WTC11 (cell line): ENCODE measurements at regions of chr10 and their contacts with region 1.

Region 1: DNA sequence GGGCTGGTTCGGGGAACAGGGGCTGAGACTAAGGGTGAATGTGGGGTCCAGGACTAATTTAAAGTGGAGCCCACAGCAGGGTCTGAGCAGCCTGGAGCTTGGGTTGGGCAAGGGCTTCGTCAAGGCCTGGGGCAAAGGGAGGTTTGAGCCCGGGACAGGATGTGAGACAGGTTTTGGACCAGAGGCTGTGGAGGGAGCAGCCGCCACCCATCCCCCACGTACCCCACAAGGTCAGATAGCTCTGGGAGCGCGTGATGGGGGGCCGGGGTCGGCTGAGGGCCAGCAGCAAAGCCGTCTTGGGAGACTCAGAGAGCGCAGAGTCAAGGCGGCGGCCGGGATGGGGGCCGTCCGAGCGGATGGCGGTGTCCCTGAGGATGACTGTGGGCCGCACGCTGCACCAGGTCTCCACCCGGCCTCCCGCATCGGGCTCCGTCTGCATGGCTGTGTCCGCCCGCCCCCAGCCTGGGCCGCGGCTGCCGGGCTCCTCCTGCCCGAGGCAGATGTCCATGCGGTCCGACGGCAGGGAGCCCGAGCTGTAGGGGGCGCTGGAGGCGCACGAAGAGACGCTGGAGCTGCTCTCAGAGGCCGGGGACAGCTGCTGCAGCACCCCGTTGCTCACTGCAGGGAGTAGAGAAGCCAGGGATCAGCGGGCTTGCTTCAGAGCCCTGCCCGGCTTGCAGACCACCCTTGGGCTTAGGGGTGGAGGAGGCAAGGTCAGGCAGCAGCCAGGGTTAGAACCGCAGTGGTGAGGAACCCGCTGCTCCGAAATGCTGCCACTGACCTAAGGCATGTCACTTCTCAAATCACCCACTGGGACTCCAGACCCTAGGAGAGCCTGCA is 12.1 kb downstream of the PDZD7 start:
- DNase-seq: peak; percentile 95
- ATAC-seq: peak; percentile 77
- H3K4me3 Mint-ChIP-seq: peak overlapping the region; percentile 73
- H3K27ac Mint-ChIP-seq: no peak overlapping the region
- H3K4me1 Mint-ChIP-seq: peaks cover 15% of the 10 kb centered on the region
- H3K27me3 Mint-ChIP-seq: peaks cover 64% of the 10 kb centered on the region
- CTCF ChIP-seq: peak; percentile 70

Region 2: GRCh38 chr10:100969187-100970075 is 49.4 kb before region 1 on chr10 and contains the start of gene SEMA4G:
- CTCF ChIA-PET with region 1: interaction called, 27 read pairs
- POLR2A ChIA-PET with region 1: no interaction called
- DNase-seq: peak; percentile 76
- ATAC-seq: peak; percentile 84
- H3K4me3 Mint-ChIP-seq: peak within 1 kb of the TSS; percentile 74
- H3K27ac Mint-ChIP-seq: no peak within 1 kb of the TSS
- H3K4me1 Mint-ChIP-seq: peaks cover 31% of the 10 kb centered on the region
- H3K27me3 Mint-ChIP-seq: no peaks in the 10 kb centered on the region; the same call in 1 of the 2 replicates
- CTCF ChIP-seq: peak; percentile 59; the same call in 1 of the 2 replicates
- total RNA-seq, gene SEMA4G: 9.7 to 13.0 TPM (median 11.8 TPM) in 3 replicates

Region 3: DNA sequence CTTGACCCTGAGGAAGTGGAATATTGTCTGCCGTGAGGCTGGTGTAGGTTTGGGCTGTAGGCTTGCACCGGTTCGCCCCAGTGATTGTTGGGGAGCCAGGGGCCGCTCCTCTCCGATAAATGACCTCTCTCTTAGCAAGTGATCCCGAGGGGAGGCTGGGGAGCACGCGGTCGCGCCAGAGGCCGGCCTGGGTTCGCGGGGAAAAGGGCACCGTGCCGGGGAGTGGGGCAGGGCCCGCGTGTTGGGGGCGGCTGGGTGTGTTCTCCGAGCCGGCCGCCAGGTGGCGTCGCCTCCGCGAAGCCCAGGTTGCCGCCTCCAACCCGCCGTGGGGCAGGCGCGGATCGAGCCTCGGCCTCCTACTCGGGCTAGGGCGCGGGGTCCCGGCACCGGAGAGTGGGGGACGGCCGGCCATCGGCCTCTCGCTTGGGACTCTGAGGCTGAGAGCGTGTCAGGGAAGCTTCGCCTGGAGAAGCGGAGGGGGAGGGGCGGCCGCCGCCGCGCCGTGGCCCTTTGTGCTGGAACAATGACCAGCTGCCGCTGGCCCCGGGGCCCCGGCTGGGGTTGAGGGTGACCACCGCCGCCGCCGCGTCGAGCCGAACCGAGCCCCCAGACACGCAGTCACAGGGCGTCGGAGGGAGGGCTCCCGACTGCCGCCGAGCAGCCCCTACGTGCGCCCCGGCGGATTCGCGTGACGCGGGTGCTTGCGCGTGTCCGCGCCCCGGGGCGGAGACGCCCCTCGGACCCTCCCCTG is 19.7 kb before region 1 on chr10:
- CTCF ChIA-PET with region 1: interaction called, 277 read pairs
- POLR2A ChIA-PET with region 1: interaction called, 14 read pairs
- DNase-seq: peak; percentile 73
- ATAC-seq: peak; percentile 4
- H3K4me3 Mint-ChIP-seq: peak overlapping the region; percentile 83
- H3K27ac Mint-ChIP-seq: peak overlapping the region; percentile 95
- H3K4me1 Mint-ChIP-seq: peaks cover 32% of the 10 kb centered on the region
- H3K27me3 Mint-ChIP-seq: no peaks in the 10 kb centered on the region
- CTCF ChIP-seq: peak; percentile 97

Region 4: GRCh38 chr10:101031128-101031795 is 12.4 kb after region 1 on chr10 and contains the starts of genes PDZD7 and SFXN3:
- CTCF ChIA-PET with region 1: interaction called, 219 read pairs
- POLR2A ChIA-PET with region 1: no interaction called
- DNase-seq: peak; percentile 97
- ATAC-seq: peak; percentile 88
- H3K4me3 Mint-ChIP-seq: peak within 1 kb of the TSS; percentile 75
- H3K27ac Mint-ChIP-seq: no peak within 1 kb of the TSS
- H3K4me1 Mint-ChIP-seq: peaks cover 36% of the 10 kb centered on the region
- H3K27me3 Mint-ChIP-seq: peaks cover 55% of the 10 kb centered on the region
- CTCF ChIP-seq: no peak
- total RNA-seq, gene PDZD7: 1.9 to 2.7 TPM (median 2.6 TPM) in 3 replicates
- total RNA-seq, gene SFXN3: 2.5 to 5.6 TPM (median 3.2 TPM) in 3 replicates

Region 5: GRCh38 chr10:101060036-101060950 is 41.5 kb after region 1 on chr10:
- CTCF ChIA-PET with region 1: interaction called, 41 read pairs
- POLR2A ChIA-PET with region 1: no interaction called
- DNase-seq: peak; percentile 90
- ATAC-seq: peak; percentile 43
- H3K4me3 Mint-ChIP-seq: peak overlapping the region; percentile 97
- H3K27ac Mint-ChIP-seq: peak overlapping the region; percentile 98
- H3K4me1 Mint-ChIP-seq: peaks cover 38% of the 10 kb centered on the region
- H3K27me3 Mint-ChIP-seq: peaks cover 38% of the 10 kb centered on the region
- CTCF ChIP-seq: peak; percentile 84

Region 6: DNA sequence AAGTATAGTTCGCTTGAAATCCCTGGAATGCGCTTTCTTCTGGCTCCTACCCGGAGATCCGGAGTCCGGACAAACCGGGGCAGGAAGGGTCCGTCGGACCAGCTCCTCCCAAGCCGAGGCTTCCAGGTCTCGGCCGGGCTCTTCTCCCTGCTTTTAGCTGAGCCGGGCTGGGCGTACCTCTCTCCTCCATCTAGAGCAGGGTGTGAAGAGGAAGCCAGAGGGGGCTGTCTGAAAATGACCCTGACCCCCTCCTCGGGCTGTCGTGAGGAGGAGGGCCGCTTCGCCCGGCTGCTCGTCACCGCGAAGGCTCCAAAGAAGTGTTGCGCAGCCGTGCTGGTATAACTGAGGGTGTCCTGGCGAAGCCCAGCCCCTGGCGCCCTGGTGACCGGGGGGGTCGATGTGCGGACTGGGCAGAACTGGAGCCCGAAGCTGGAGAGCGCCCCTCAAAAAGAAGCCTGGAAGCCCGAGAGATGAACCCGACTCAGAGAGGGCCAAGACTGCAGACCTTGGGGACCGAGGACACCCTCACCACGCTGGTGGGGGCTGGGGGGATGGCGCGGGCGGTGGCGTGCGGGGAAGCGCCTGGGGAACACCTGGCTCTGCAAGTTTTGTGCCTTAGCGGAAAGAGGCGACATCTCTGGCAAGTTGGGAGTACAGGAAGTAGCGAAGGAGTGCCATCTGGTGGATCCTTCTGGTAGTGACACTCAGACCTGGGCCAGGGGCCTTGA is 48.7 kb after region 1 on chr10:
- CTCF ChIA-PET with region 1: interaction called, 41 read pairs
- POLR2A ChIA-PET with region 1: no interaction called
- DNase-seq: peak; percentile 89
- ATAC-seq: peak; percentile 26
- H3K4me3 Mint-ChIP-seq: peak overlapping the region; percentile 93
- H3K27ac Mint-ChIP-seq: no peak overlapping the region
- H3K4me1 Mint-ChIP-seq: peaks cover 42% of the 10 kb centered on the region
- H3K27me3 Mint-ChIP-seq: peaks cover 72% of the 10 kb centered on the region
- CTCF ChIP-seq: peak; percentile 68

Region 7: DNA sequence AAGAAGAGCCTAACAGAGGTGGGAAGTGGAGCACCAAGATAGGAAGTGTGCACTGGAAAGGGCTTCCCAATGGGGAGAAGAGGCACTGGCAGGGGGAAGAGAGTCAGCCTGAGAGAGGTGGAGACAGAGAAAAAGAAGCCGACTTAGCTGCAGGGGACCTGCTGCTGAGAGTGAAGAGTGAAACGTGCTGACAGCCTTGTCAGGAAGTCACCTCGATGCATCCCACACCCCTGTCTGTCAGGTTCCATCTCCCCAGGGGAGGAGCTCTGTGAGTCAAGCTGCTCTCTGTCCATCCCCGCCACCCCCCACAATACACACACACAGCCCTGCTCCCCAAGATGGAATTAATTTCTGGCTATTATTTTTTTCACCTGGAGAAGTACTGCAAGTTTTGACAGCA is 57.0 kb after region 1 on chr10:
- CTCF ChIA-PET with region 1: interaction called, 11 read pairs
- POLR2A ChIA-PET with region 1: no interaction called
- DNase-seq: no peak
- ATAC-seq: no peak
- H3K4me3 Mint-ChIP-seq: no peak overlapping the region
- H3K27ac Mint-ChIP-seq: no peak overlapping the region
- H3K4me1 Mint-ChIP-seq: peaks cover 41% of the 10 kb centered on the region
- H3K27me3 Mint-ChIP-seq: peaks cover 79% of the 10 kb centered on the region
- CTCF ChIP-seq: no peak